ENCODE measurements at regions of chr6 and their contacts with region 1.

Region 1: GRCh38 chr6:136550330-136551071 is at the start of gene MAP7:
- DNase-seq: peak; percentile 81 to 94
- H3K4me3 ChIP-seq: peak within 1 kb of the TSS; percentile 68 to 99 (median 83)
- H3K27ac ChIP-seq: peak within 1 kb of the TSS; percentile 68; the same call in 1 of the 2 replicates
- H3K4me1 ChIP-seq: peaks cover 0 to 10% (median 1%) of the 10 kb centered on the region in 4 experiments; a peak in 5 of 7 replicates
- H3K27me3 ChIP-seq: peaks cover 0 to 14% (median 7%) of the 10 kb centered on the region in 4 experiments; a peak in 5 of 7 replicates
- CTCF ChIP-seq: peak; percentile 56 to 83 (median 74)
- EP300 ChIP-seq: peak in 1 of 2 experiments; percentile 87; a peak in 2 of 3 replicates
- POLR2A ChIP-seq: peak in 1 of 2 experiments; percentile 68; a peak in 2 of 3 replicates
- RAD21 ChIP-seq: peak; percentile 75 to 83
- total RNA-seq, gene MAP7: 66.9 and 67.0 TPM in 2 replicates

Region 2: DNA sequence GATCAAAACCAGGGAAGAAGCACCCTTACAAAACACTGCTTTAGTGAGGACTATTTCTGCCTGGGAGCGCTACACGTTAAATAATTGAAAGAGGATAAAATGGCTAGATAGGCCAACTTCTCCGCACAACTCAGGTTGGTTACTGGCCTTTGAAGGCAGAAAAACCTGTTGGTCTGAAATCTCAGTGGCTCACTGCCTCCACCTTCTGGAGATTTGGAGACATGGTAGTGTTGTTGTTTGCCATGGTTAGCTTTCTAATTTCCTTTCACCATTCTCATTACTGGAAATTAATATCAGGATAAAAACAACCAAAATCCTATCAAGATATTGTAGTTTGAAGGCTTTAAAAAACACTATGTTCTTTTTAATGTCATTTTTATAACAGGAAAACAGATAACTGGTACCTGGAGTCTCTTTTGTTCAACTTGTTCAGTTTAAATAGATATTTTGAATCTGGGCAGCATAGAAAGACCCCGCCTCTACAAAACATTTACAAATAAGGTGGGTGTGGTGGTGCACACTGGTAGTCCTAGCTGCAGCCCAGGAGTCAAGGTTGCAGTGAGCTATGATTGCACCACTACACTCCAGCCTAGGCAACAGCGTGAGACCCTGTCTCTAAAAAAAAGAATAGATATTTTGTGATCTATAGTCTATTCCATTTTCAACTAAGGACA is 233.3 kb before region 1 on chr6:
- CTCF ChIA-PET with region 1: interaction called, 12 read pairs
- POLR2A ChIA-PET with region 1: no interaction called
- DNase-seq: peak in 1 of 2 experiments; percentile 25
- H3K4me3 ChIP-seq: no peak overlapping the region
- H3K27ac ChIP-seq: no peak overlapping the region
- H3K4me1 ChIP-seq: no peaks in the 10 kb centered on the region
- H3K27me3 ChIP-seq: no peaks in the 10 kb centered on the region
- CTCF ChIP-seq: peak; percentile 17 to 80 (median 72)
- EP300 ChIP-seq: no peak
- POLR2A ChIP-seq: no peak
- RAD21 ChIP-seq: peak; percentile 85 to 86

Region 3: GRCh38 chr6:136334853-136335252 is 215.6 kb before region 1 on chr6:
- CTCF ChIA-PET with region 1: interaction called, 12 read pairs
- POLR2A ChIA-PET with region 1: interaction called, 3 read pairs
- DNase-seq: peak in 1 of 2 experiments; percentile 76
- H3K4me3 ChIP-seq: no peak overlapping the region
- H3K27ac ChIP-seq: no peak overlapping the region
- H3K4me1 ChIP-seq: no peaks in the 10 kb centered on the region; a peak in 1 of 7 replicates
- H3K27me3 ChIP-seq: no peaks in the 10 kb centered on the region; a peak in 1 of 7 replicates
- CTCF ChIP-seq: peak; percentile 48 to 77 (median 63)
- EP300 ChIP-seq: no peak
- POLR2A ChIP-seq: no peak
- RAD21 ChIP-seq: peak; percentile 37 to 43; a peak in 3 of 4 replicates

Region 4: DNA sequence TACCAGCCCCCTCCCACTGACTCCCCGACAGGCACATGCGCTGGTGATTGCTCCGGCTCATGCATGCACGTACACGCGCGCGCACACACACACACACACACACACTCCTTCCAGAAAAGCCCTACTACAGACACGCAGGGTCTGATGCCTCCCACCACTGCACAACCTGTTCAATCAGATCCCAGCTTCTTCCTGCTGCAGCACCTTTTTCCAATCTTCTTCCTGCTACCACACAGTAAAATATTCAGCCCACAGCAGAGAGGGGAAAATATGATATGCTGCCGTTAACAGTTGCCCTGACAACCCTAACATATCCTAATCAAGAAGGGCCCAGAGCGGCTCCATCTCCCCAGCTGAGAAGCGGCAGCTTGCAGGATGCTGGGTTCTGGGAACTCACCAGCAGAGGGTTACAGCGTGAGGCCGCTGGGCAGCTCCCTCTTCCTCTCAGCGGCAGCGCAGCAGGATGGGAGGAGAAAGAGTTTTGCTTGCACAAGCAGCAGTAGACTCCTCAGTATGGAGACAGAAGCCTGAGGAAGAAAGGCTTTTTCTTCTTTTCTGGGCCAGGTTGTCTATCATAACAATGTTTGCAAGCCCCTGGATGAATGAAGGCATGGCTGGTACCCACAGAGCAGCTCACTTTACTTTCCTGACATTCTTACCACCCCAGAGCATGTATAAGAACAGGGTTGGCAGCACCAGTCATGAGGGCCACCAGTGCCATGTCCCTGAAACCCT is 24.1 kb before region 1 on chr6:
- CTCF ChIA-PET with region 1: interaction called, 22 read pairs
- POLR2A ChIA-PET with region 1: interaction called, 5 read pairs
- DNase-seq: peak; percentile 51 to 72
- H3K4me3 ChIP-seq: peak overlapping the region in 1 of 4 experiments; percentile 11; a peak in 1 of 8 replicates
- H3K27ac ChIP-seq: no peak overlapping the region
- H3K4me1 ChIP-seq: peaks cover 15 to 31% (median 27%) of the 10 kb centered on the region in 4 experiments
- H3K27me3 ChIP-seq: no peaks in the 10 kb centered on the region
- CTCF ChIP-seq: peak; percentile 49 to 64 (median 61)
- EP300 ChIP-seq: no peak
- POLR2A ChIP-seq: no peak
- RAD21 ChIP-seq: peak; percentile 49 to 54

Region 5: GRCh38 chr6:136539967-136540652 is 10.4 kb before region 1 on chr6:
- CTCF ChIA-PET with region 1: interaction called, 20 read pairs
- POLR2A ChIA-PET with region 1: interaction called, 5 read pairs
- DNase-seq: no peak
- H3K4me3 ChIP-seq: no peak overlapping the region
- H3K27ac ChIP-seq: no peak overlapping the region
- H3K4me1 ChIP-seq: peaks cover 2 to 14% (median 10%) of the 10 kb centered on the region in 4 experiments; a peak in 5 of 7 replicates
- H3K27me3 ChIP-seq: no peaks in the 10 kb centered on the region
- CTCF ChIP-seq: no peak
- EP300 ChIP-seq: no peak
- POLR2A ChIP-seq: no peak
- RAD21 ChIP-seq: no peak